AG04450 (cell line): ENCODE measurements at regions of chr7 and their contacts with region 1.

Region 1: GRCh38 chr7:155190688-155191087 is 107.0 kb upstream of the INSIG1 start:
- DNase-seq: no peak
- H3K4me3 ChIP-seq: 0 out of 2 replicates have a peak overlapping the region, but pooled peaks have one; percentile 13
- H3K27ac ChIP-seq: no peak overlapping the region
- H3K27me3 ChIP-seq: peaks cover 2% of the 10 kb centered on the region
- CTCF ChIP-seq: peak; percentile 87

Region 2: GRCh38 chr7:155136619-155137243 is 54.0 kb before region 1 on chr7:
- CTCF ChIA-PET with region 1: no interaction called
- POLR2A ChIA-PET with region 1: no interaction called
- DNase-seq: no peak
- H3K4me3 ChIP-seq: no peak overlapping the region
- H3K27ac ChIP-seq: no peak overlapping the region
- H3K27me3 ChIP-seq: no peaks in the 10 kb centered on the region
- CTCF ChIP-seq: no peak

Region 3: DNA sequence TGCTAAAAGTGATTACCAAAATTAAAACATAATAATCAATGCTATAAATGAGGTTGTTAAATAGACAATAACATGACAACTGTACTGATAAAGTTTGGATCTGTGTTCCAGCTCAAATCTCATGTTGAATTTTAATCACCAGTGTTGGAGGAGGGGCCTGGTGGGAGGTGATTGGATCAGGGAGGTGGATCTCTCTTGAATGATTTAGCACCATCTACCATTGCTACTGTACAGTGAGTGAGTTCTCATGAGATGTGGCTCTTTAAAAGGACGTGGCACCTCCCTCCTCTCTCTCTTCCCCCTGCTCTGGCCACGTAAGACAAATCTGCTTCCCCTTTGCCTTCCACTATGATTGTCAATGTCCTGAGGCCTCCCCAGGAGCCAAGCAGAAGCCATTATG is 43.1 kb before region 1 on chr7:
- CTCF ChIA-PET with region 1: no interaction called
- POLR2A ChIA-PET with region 1: no interaction called
- DNase-seq: no peak
- H3K4me3 ChIP-seq: no peak overlapping the region
- H3K27ac ChIP-seq: no peak overlapping the region
- H3K27me3 ChIP-seq: no peaks in the 10 kb centered on the region
- CTCF ChIP-seq: no peak

Region 4: GRCh38 chr7:155213955-155214740 is 23.5 kb after region 1 on chr7:
- CTCF ChIA-PET with region 1: interaction called, 12 read pairs
- POLR2A ChIA-PET with region 1: no interaction called
- DNase-seq: no peak
- H3K4me3 ChIP-seq: peak overlapping the region; percentile 41
- H3K27ac ChIP-seq: no peak overlapping the region
- H3K27me3 ChIP-seq: no peaks in the 10 kb centered on the region
- CTCF ChIP-seq: no peak

Region 5: DNA sequence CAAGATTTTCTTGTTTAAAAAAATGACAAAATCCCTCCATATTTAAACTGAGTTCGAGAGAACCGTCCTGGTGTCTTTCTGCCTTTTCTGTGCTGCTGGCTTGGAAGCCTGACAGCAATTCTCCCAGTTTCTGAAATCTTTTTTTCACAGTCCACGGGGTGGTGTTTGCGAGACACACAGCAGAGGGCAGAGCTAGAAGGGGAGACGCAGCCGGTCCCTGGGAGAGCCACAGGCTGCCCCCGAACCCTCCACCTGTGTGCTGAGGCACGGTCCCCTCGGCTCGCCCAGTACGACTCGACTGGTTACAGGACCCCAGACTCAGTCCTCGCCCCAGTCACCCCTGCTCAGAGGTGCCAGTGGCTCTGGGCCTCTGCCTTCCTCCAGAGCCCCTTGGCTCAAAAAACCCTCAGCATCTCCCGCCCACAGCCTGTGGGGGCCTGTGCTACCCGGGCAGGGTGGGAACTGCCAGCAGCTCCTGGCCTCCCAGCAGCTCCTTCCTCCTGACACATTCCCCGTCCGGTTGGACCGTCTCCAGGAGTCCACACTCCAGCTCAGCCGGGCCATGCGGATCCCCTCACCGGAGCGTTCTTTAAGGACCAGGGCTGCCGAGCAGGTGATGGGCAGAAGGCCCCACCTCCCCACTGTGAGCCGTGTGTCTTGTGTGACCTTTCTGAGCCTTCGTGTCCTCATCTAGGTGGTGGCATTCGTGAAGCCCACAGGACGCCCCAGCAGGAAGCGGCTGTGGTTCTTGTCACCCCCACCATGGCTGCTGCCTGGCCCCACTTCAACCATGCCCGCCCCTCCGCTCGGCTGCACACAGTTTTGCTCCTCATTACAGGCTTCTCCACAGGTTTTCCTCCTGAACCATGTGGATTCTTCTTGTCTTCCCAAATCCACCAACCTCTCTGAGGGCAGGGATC is 215.0 kb after region 1 on chr7:
- CTCF ChIA-PET with region 1: no interaction called
- POLR2A ChIA-PET with region 1: no interaction called
- DNase-seq: no peak
- H3K4me3 ChIP-seq: no peak overlapping the region
- H3K27ac ChIP-seq: no peak overlapping the region
- H3K27me3 ChIP-seq: no peaks in the 10 kb centered on the region
- CTCF ChIP-seq: no peak